Cardiac septum (tissue), 1 donor: ENCODE measurements at regions of chr3 and their contacts with region 1.

Region 1: DNA sequence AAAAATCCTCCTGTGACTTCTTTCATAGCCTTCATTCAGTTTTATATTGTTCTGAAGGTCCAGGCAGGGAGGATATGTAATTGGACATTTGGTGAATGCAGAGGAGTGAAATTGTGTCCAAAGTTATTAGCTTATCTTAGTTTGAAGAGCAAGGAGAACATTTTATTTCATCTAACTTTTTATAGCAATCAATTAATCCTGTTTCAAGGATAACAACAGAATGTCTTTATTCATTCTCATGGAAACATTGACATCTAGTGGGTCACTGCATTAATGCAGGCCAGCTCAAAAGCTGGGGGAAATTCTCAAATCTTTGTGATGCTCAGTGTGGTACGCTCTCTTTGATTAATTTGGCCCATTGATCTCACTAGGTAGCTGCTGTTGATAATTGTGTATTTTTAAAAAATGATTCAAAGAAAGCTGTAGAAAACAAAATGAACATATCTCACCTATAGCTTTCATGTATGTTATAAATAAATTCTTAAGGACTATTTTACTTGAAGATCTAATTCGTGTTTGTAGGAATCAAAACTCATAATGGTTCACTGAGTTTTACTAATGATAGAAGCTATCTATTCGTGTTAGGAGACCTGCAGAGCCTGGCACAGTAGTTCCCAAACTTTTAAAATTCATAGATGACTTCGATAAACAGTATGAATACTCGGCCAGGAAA is 150.8 kb upstream of the KCNMB2 start:
- DNase-seq: no peak

Region 2: GRCh38 chr3:176514297-176514696 is 1871.1 kb before region 1 on chr3:
- intact Hi-C with region 1: loop called (anchors 10 kb)
- DNase-seq: no peak

Region 3: GRCh38 chr3:176939022-176939817 is 1446.2 kb before region 1 on chr3:
- intact Hi-C with region 1: loop called (anchors 5 kb)
- DNase-seq: no peak

Region 4: DNA sequence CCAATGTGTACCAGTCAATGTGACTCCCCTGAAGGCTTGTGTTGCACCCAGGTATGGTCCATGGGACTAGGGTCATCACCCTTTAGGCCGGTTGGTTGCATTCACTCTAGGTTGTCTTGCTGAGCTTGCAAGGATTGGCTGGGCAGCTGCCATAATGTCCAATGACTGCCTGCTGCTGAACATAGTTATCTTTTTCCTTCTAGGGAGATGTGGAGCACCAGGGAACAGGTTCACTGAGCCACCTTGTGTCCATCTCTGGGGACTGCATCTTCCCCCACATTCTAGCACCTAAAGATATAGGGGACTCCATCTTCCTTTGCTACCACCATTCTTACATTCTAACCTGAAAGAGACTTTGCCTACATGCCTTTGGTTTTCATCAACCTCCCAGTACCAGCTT is 607.7 kb before region 1 on chr3:
- intact Hi-C with region 1: loop called (anchors 5 kb)
- DNase-seq: no peak

Region 5: GRCh38 chr3:178325330-178325729 is 60.1 kb before region 1 on chr3:
- intact Hi-C with region 1: loop called (anchors 5 kb)
- DNase-seq: no peak